ENCODE measurements at regions of chr6 and their contacts with region 1.

Region 1: GRCh38 chr6:32113386-32114352 is 4.5 kb upstream of the TNXB start:
- DNase-seq: peak; percentile 78 to 96
- H3K4me3 ChIP-seq: no peak overlapping the region
- H3K27ac ChIP-seq: peak overlapping the region; percentile 68 to 81
- H3K4me1 ChIP-seq: peaks cover 3 to 34% of the 10 kb centered on the region in 2 donors
- H3K27me3 ChIP-seq: no peaks in the 10 kb centered on the region
- CTCF ChIP-seq: peak; percentile 50 to 69 (median 60)

Region 2: DNA sequence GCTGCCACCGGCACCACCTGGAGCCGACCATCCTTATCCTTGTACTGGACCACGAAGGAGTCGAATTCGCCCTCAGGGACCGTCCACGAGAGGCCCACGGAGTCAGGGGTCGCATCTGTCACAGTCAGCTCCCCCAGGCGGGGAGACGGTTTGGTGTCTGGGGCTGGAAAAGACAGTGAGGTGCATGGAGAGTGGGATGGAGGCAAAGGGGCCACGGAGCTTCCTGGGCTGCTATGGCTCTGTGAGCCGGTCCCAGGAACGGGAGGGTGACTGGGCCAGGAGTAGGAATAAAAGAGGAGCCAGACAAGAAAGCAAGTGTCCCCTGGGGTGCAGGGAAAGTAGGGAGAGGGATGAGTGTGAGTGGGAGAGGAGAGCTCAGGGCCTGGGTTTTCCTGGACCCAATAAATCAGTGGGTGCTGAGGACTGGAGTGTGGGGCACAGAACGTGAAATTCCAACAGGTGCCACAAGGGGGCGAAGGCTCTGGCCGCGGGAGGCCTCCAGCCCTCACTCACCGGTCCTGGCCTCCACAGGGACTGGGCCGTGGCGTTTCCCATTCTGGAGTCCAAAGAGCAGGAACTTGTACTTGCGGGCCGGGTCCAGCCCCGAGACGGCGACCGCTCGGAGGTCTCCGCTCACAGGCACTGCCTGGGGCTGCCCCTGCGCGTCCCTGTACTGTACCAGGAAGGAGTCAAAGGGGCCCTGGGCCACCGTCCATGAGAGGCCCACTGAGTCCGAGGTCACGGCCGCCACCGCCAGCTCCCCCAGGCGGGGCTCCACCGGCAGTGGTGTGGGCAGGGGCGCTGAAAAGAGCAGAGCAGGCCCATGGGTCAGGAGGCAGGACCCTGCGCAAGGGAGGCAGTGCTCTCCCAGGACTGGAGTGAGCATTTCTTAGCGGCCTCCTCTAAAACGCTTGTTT is 65.6 kb before region 1 on chr6:
- intact Hi-C with region 1: loop called (anchors 2 kb)
- DNase-seq: peak in 1 of 2 donors; percentile 87
- H3K4me3 ChIP-seq: no peak overlapping the region
- H3K27ac ChIP-seq: peak overlapping the region; percentile 69 to 77
- H3K4me1 ChIP-seq: peaks cover 0 to 19% of the 10 kb centered on the region in 2 donors
- H3K27me3 ChIP-seq: no peaks in the 10 kb centered on the region
- CTCF ChIP-seq: peak; percentile 81 to 91 (median 83)